Prostate gland (tissue), 2 donors: ENCODE measurements at regions of chr12 and their contacts with region 1.

Region 1: DNA sequence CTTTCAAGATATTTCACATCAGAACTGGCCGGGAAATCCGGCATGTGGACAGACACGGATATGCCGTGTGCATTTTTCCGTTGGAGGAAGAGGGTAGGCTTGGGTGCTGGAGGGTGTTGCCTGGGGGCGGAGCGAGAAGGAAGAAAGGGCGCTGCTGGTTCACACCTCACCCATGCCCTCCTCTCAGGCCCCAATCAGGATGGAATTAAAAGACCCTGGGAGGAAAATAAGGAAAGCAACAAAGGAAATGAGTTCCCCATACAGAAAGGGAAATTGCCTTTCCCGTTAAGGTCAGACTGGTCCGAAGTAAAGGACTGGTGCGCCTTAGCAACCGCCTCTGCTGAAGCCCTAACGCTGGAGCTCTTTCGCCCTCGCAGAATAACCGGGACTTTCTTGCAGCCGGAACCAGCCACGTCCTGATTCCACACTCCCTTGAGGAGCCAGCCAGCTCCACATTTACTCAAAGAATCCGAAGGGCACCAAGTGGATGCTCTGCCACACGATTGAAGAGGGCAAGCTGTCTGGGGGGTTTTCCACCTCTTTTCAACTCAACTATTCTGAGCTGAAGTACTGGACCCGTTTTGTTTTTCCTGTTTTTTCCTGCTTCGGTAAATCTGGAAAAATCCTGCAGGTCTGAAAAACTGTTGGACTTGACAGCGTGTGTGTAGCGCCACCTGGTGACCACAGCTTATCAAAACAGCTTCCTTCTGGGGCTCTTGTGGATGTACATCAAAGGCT is 37.7 kb upstream of the BCL2L14 start:
- DNase-seq: peak; percentile 84
- H3K4me3 ChIP-seq: peak overlapping the region; percentile 7 to 25
- H3K27ac ChIP-seq: peak overlapping the region; percentile 64 to 70
- H3K4me1 ChIP-seq: peaks cover 4% of the 10 kb centered on the region
- H3K27me3 ChIP-seq: no peaks in the 10 kb centered on the region
- CTCF ChIP-seq: peak; percentile 87 to 95 (median 89)
- POLR2A ChIP-seq: peak; percentile 3

Region 2: GRCh38 chr12:11778713-11779685 is 254.0 kb before region 1 on chr12:
- intact Hi-C with region 1: loop called (anchors 10 kb)
- DNase-seq: no peak
- H3K4me3 ChIP-seq: no peak overlapping the region
- H3K27ac ChIP-seq: no peak overlapping the region
- H3K4me1 ChIP-seq: no peaks in the 10 kb centered on the region
- H3K27me3 ChIP-seq: no peaks in the 10 kb centered on the region
- CTCF ChIP-seq: no peak
- POLR2A ChIP-seq: no peak

Region 3: GRCh38 chr12:11836282-11837151 is 196.5 kb before region 1 on chr12:
- intact Hi-C with region 1: no loop called
- DNase-seq: no peak
- H3K4me3 ChIP-seq: no peak overlapping the region
- H3K27ac ChIP-seq: no peak overlapping the region
- H3K4me1 ChIP-seq: peaks cover 3% of the 10 kb centered on the region
- H3K27me3 ChIP-seq: no peaks in the 10 kb centered on the region
- CTCF ChIP-seq: no peak
- POLR2A ChIP-seq: no peak

Region 4: GRCh38 chr12:11891754-11892386 is 141.2 kb before region 1 on chr12:
- intact Hi-C with region 1: loop called (anchors 10 kb)
- DNase-seq: no peak
- H3K4me3 ChIP-seq: no peak overlapping the region
- H3K27ac ChIP-seq: no peak overlapping the region
- H3K4me1 ChIP-seq: no peaks in the 10 kb centered on the region
- H3K27me3 ChIP-seq: no peaks in the 10 kb centered on the region
- CTCF ChIP-seq: no peak
- POLR2A ChIP-seq: no peak

Region 5: GRCh38 chr12:12091977-12092663 is 59.1 kb after region 1 on chr12:
- intact Hi-C with region 1: no loop called
- DNase-seq: no peak
- H3K4me3 ChIP-seq: no peak overlapping the region
- H3K27ac ChIP-seq: no peak overlapping the region
- H3K4me1 ChIP-seq: no peaks in the 10 kb centered on the region
- H3K27me3 ChIP-seq: no peaks in the 10 kb centered on the region
- CTCF ChIP-seq: no peak
- POLR2A ChIP-seq: no peak